Activated T-helper 2 cell treated with anti-CD3 and anti-CD28 coated beads, Interferon-gamma antibody, Interleukin-2, Interleukin-4, amounts not matched to agents 10 μg/mL and 5 μg/mL and 100 μg/mL, durations not matched to agents 14 hours and 24 hours and 36 hours (primary cell): ENCODE measurements at regions of chr2 and their contacts with region 1.

Region 1: GRCh38 chr2:53880756-53881155 is 21.0 kb upstream of the GPR75 start:
- DNase-seq: no peak
- H3K4me3 Mint-ChIP-seq: no peak overlapping the region
- H3K27ac Mint-ChIP-seq: no peak overlapping the region
- H3K4me1 Mint-ChIP-seq: peaks cover 28% of the 10 kb centered on the region
- H3K27me3 Mint-ChIP-seq: no peaks in the 10 kb centered on the region

Region 2: GRCh38 chr2:52703004-52703403 is 1177.8 kb before region 1 on chr2:
- intact Hi-C with region 1: no loop called
- DNase-seq: no peak
- H3K4me3 Mint-ChIP-seq: no peak overlapping the region
- H3K27ac Mint-ChIP-seq: no peak overlapping the region
- H3K4me1 Mint-ChIP-seq: no peaks in the 10 kb centered on the region
- H3K27me3 Mint-ChIP-seq: no peaks in the 10 kb centered on the region

Region 3: DNA sequence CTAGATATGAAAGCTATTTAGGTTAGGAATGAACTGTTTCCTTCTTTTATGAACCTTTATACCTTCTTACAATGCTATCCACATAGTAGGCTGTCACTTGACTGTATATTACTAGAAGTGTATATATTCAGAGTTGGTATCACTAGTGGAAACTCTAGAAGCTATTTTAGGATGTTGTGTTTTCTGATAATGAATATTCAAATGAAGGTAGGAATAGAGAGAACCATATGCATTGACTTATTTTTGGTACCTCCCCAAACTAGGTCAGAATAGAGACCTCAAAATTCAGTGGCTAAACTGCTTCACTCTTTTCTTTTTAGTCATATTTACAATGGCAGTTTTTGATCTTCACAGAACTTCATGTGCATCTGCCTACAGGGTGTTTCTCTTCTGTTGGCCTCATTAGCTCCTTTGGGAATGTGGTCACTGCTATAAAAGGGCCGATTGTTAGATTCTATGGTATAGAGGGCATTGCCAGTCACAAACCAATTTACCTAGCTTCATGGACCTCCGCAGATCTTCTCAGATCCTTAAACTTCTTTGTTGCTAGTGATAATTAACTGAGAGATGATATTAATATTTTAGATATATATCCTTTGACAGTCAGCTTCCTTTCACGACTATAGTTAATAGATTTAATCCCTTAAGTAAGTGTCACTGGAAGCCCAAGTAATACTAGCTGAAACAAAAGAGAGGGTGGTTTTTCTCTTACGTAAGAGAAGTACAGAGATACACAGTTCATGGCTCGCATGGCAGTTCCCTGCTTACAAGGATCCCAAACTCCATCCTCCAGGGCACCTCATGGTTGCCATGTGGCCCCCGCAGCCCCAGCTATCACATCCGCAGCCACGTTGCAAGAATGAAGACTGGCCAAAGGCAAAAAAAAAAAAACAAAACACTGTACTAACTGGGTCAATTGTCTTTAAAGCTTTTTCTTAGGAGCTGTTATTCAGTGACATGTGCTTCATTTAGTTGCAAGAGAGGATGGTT is 314.3 kb after region 1 on chr2:
- intact Hi-C with region 1: no loop called
- DNase-seq: no peak
- H3K4me3 Mint-ChIP-seq: no peak overlapping the region
- H3K27ac Mint-ChIP-seq: no peak overlapping the region
- H3K4me1 Mint-ChIP-seq: no peaks in the 10 kb centered on the region
- H3K27me3 Mint-ChIP-seq: no peaks in the 10 kb centered on the region

Region 4: DNA sequence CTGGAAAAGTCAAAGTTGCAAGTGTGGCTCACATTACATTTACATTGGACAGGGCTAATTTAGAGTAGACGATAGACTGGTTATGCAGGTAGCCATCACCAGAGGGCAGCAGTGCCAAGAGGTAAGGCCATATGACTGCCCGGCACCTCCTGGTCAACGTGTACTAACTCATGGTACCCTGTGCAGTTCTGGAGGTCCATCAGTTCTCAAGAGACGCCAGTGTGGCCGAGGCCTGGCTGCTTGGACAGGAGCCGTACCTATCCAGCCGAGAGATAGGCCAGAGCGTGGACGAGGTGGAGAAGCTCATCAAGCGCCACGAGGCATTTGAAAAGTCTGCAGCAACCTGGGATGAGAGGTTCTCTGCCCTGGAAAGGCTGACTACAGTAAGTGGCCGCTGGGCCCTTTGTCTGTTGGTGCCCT is 776.9 kb after region 1 on chr2:
- intact Hi-C with region 1: loop called (anchors 10 kb)
- DNase-seq: no peak
- H3K4me3 Mint-ChIP-seq: no peak overlapping the region
- H3K27ac Mint-ChIP-seq: peak overlapping the region; percentile 8
- H3K4me1 Mint-ChIP-seq: peaks cover 21% of the 10 kb centered on the region
- H3K27me3 Mint-ChIP-seq: no peaks in the 10 kb centered on the region